Activated CD4-positive, alpha-beta memory T cell treated with anti-CD3 and anti-CD28 coated beads for 36 hours (primary cell): ENCODE measurements at regions of chr12 and their contacts with region 1.

Region 1: DNA sequence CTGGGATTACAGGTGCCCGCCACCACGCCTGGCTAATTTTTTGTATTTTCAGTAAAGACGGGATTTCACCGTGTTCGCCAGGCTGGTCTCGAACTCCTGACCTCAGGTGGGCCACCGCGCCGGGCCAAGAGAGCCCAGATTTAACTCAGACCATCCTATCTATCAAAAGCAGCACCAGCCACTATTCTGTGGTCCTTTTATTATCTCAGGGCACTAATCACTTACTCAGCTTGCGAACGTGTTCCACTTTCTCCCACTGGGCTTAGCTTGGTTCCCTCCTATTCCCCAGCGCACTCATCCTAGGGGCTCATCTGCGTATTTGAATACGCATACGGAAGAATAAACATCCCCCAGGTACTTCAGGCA is 16.2 kb upstream of the AACS start:
- DNase-seq: no peak
- H3K4me3 Mint-ChIP-seq: peak overlapping the region; percentile 79
- H3K27ac Mint-ChIP-seq: peak overlapping the region; percentile 38
- H3K4me1 Mint-ChIP-seq: peaks cover 5% of the 10 kb centered on the region
- H3K27me3 Mint-ChIP-seq: no peaks in the 10 kb centered on the region

Region 2: GRCh38 chr12:125065021-125065795 is 16.1 kb after region 1 on chr12 and contains the start of gene AACS:
- CTCF ChIA-PET with region 1: interaction called, 3 read pairs
- POLR2A ChIA-PET with region 1: interaction called, 5 read pairs
- intact Hi-C with region 1: loop called (anchors 1 kb)
- DNase-seq: peak; percentile 84
- H3K4me3 Mint-ChIP-seq: peak within 1 kb of the TSS; percentile 77
- H3K27ac Mint-ChIP-seq: no peak within 1 kb of the TSS
- H3K4me1 Mint-ChIP-seq: peaks cover 18% of the 10 kb centered on the region
- H3K27me3 Mint-ChIP-seq: peaks cover 3% of the 10 kb centered on the region
- total RNA-seq, gene AACS: 17.3 to 17.6 TPM

Region 3: DNA sequence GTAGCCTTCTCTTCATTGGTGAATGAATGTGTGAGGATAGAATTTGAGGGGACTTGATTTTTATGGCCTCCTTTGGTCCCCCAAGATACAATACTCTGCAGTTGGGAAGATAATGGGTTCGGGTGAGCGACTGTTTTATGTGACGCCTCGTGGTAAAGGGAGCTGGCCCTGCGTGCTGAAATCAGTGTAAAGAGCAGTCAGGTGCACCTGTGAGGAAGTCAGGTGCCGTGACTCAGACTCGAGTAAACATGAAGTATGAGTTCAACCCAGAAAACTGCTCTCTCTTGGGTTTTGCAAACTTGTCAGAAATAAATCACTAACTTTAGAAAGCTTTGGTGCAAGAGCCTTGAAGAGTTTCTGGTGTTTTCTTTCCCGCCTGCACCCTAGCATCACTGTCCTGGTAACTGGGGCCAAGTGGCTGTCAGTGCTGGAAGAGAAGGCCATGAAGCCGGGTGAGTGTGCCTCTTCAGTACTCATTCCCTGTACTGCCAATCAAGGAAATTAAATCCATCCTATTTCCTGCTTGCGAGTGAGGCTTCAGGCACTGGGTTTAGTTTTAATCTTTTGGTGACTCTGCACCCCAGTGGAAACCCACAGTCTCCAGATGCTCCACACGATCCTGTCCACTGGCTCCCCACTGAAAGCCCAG is 75.4 kb after region 1 on chr12:
- CTCF ChIA-PET with region 1: no interaction called
- POLR2A ChIA-PET with region 1: no interaction called
- intact Hi-C with region 1: no loop called
- DNase-seq: no peak
- H3K4me3 Mint-ChIP-seq: no peak overlapping the region
- H3K27ac Mint-ChIP-seq: no peak overlapping the region
- H3K4me1 Mint-ChIP-seq: no peaks in the 10 kb centered on the region
- H3K27me3 Mint-ChIP-seq: no peaks in the 10 kb centered on the region